ENCODE measurements at regions of chr12 and their contacts with region 1.

Region 1: GRCh38 chr12:53220801-53221202 is 11.2 kb downstream of the RARG start:
- DNase-seq: peak; percentile 46 to 93 (median 75)
- ATAC-seq: peak; percentile 60
- H3K4me3 ChIP-seq: peak overlapping the region; percentile 69 to 88
- H3K4me3 Mint-ChIP-seq: peak overlapping the region; percentile 99
- H3K27ac ChIP-seq: peak overlapping the region; percentile 66 to 91
- H3K27ac Mint-ChIP-seq: peak overlapping the region; percentile 93
- H3K4me1 ChIP-seq: peaks cover 67% of the 10 kb centered on the region
- H3K4me1 Mint-ChIP-seq: peaks cover 82% of the 10 kb centered on the region
- H3K27me3 ChIP-seq: no peaks in the 10 kb centered on the region
- H3K27me3 Mint-ChIP-seq: no peaks in the 10 kb centered on the region
- CTCF ChIP-seq: no peak

Region 2: DNA sequence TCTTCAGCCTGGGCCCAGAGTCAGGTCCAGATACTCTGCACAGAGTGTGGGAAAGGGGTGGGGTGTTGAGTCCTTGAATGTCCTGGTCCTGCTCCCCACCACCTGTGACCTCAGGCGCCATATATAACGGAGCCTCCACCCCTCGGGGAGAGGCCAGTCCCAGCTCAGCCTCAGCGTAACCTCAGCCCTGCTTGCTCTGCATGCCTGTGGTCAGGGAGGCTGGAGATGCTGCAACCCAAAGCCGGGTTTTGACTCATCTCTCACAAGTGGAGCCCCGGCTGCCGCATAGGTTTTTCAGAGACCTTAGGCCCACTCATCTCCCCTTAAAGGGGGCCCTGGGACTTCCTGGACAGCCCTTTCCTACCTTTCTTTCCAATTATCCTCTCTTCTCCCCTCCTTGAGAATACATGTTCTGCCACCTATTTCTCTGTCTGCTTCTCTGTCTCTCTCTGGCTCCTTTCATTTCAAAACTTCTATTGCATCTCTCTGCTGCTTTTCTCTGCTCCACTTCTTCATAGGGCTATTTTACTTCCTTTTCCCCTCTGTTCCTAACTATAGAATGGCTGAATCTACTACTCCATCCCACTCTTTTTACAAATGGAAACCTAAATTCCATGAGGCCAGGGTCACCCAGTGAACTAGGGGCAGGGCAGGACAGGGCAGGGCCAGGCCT is 14.9 kb before region 1 on chr12:
- CTCF ChIA-PET with region 1: interaction called, 26 read pairs
- POLR2A ChIA-PET with region 1: interaction called, 19 read pairs
- intact Hi-C with region 1: no loop called
- DNase-seq: peak in 8 of 9 experiments; percentile 43 to 74 (median 69)
- ATAC-seq: peak; percentile 53
- H3K4me3 ChIP-seq: peak overlapping the region; percentile 68 to 71
- H3K4me3 Mint-ChIP-seq: peak overlapping the region; percentile 84
- H3K27ac ChIP-seq: peak overlapping the region; percentile 48 to 71
- H3K27ac Mint-ChIP-seq: peak overlapping the region; percentile 90
- H3K4me1 ChIP-seq: peaks cover 70% of the 10 kb centered on the region
- H3K4me1 Mint-ChIP-seq: peaks cover 71% of the 10 kb centered on the region
- H3K27me3 ChIP-seq: no peaks in the 10 kb centered on the region
- H3K27me3 Mint-ChIP-seq: no peaks in the 10 kb centered on the region
- CTCF ChIP-seq: no peak

Region 3: GRCh38 chr12:53231826-53232645 is 11.2 kb after region 1 on chr12 and contains the start of gene RARG:
- CTCF ChIA-PET with region 1: interaction called, 3 read pairs
- POLR2A ChIA-PET with region 1: interaction called, 22 read pairs
- intact Hi-C with region 1: loop called (anchors 1 kb)
- DNase-seq: peak in 8 of 9 experiments; percentile 47 to 80 (median 66)
- ATAC-seq: peak; percentile 66
- H3K4me3 ChIP-seq: peak within 1 kb of the TSS; percentile 57
- H3K4me3 Mint-ChIP-seq: peak within 1 kb of the TSS; percentile 89
- H3K27ac ChIP-seq: peak within 1 kb of the TSS in 1 of 2 experiments; percentile 66
- H3K27ac Mint-ChIP-seq: peak within 1 kb of the TSS; percentile 78
- H3K4me1 ChIP-seq: peaks cover 59% of the 10 kb centered on the region
- H3K4me1 Mint-ChIP-seq: peaks cover 60% of the 10 kb centered on the region
- H3K27me3 ChIP-seq: no peaks in the 10 kb centered on the region
- H3K27me3 Mint-ChIP-seq: no peaks in the 10 kb centered on the region
- CTCF ChIP-seq: no peak
- total RNA-seq, gene RARG: 16.1 to 16.5 TPM

Region 4: DNA sequence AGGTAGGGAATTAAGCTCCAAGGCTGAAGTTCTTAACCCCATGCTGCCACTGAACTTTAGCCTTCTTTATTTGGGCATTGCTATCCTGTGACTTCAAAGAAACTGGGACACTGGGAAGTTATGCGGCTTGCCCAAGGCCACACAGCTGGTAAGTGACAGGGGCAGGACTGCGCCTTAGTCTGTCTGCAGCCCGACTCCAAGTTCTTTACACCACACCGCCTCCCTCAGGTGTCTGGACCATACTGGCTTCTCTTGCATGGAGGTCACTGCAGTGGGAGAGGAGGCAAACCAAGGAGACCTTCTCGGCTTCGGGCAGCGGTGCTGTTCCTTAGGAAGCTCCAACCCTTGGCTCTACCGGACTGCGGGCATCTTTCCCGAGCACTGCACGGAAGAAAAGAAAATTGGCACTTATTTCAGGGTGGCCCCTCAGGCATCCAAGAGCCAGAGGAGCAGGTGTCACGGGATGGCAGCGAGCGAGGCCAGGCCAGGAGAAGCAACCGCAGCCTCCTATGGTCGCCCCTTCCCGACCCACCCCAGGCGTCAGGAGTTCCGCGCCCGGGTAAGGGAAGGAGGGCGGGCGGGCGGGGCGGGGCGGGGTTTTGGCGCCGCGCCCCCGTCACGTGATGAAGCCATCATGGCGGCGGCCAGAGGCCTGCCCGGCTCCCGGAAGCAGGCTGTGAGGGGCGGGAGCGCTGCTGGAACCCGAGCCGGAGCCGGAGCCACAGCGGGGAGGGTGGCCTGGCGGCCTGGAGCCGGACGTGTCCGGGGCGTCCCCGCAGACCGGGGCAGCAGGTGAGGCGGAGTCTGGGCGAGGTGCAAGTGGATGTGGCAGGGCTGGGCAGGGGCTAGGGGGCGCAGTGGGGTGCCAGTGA is 30.9 kb after region 1 on chr12:
- CTCF ChIA-PET with region 1: interaction called, 143 read pairs
- POLR2A ChIA-PET with region 1: interaction called, 13 read pairs
- intact Hi-C with region 1: loop called (anchors 1 kb)
- DNase-seq: peak; percentile 28 to 85 (median 71)
- ATAC-seq: peak; percentile 87
- H3K4me3 ChIP-seq: peak overlapping the region; percentile 71 to 86
- H3K4me3 Mint-ChIP-seq: peak overlapping the region; percentile 98
- H3K27ac ChIP-seq: peak overlapping the region; percentile 70 to 80
- H3K27ac Mint-ChIP-seq: peak overlapping the region; percentile 96
- H3K4me1 ChIP-seq: peaks cover 46% of the 10 kb centered on the region
- H3K4me1 Mint-ChIP-seq: peaks cover 50% of the 10 kb centered on the region
- H3K27me3 ChIP-seq: no peaks in the 10 kb centered on the region
- H3K27me3 Mint-ChIP-seq: no peaks in the 10 kb centered on the region
- CTCF ChIP-seq: peak; percentile 40

Region 5: DNA sequence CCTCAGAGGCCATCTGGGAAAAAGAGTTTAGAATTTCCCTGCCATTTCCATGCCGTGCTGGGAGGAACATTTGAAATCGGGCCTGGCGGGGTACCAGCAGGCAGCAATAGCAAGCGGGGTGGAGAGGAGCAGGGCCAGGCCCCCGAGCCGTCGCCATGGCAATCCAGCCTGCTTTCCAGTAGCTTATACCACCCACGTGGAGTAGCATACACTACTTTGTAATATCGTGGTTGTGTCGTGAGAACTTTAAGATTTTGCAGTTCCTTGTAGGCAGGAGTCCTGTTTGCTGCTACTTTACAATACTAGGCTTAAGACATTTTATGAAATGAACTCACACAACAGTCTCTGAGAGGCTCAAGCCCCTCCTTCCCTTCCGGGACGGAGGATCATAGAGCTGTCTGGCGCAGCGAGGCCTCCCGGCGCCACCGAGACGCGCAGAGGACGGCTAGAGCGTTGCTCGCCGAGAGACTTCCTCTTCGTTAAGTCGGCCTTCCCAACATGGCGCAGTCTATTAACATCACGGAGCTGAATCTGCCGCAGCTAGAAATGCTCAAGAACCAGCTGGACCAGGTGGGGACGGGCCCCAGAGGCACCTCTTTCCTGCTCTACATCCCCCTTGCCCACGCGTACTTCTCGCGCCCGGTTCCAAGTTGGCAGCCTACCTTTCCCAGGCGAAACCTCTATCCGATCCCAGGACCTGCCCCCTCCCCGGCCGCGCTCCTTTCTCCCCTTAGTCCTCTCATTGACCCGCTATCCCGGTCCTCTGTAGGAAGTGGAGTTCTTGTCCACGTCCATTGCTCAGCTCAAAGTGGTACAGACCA is 74.5 kb after region 1 on chr12 and contains the start of gene PFDN5:
- CTCF ChIA-PET with region 1: interaction called, 353 read pairs
- POLR2A ChIA-PET with region 1: interaction called, 11 read pairs
- intact Hi-C with region 1: loop called in 1 of 2 experiments (anchors 2 kb)
- DNase-seq: peak; percentile 72 to 95 (median 87)
- ATAC-seq: peak; percentile 92
- H3K4me3 ChIP-seq: peak within 1 kb of the TSS; percentile 75 to 88
- H3K4me3 Mint-ChIP-seq: peak within 1 kb of the TSS; percentile 99
- H3K27ac ChIP-seq: peak within 1 kb of the TSS; percentile 80 to 82
- H3K27ac Mint-ChIP-seq: peak within 1 kb of the TSS; percentile 99
- H3K4me1 ChIP-seq: peaks cover 28% of the 10 kb centered on the region
- H3K4me1 Mint-ChIP-seq: peaks cover 51% of the 10 kb centered on the region
- H3K27me3 ChIP-seq: no peaks in the 10 kb centered on the region
- H3K27me3 Mint-ChIP-seq: no peaks in the 10 kb centered on the region
- CTCF ChIP-seq: no peak
- total RNA-seq, gene PFDN5: 741 to 751 TPM

Region 6: DNA sequence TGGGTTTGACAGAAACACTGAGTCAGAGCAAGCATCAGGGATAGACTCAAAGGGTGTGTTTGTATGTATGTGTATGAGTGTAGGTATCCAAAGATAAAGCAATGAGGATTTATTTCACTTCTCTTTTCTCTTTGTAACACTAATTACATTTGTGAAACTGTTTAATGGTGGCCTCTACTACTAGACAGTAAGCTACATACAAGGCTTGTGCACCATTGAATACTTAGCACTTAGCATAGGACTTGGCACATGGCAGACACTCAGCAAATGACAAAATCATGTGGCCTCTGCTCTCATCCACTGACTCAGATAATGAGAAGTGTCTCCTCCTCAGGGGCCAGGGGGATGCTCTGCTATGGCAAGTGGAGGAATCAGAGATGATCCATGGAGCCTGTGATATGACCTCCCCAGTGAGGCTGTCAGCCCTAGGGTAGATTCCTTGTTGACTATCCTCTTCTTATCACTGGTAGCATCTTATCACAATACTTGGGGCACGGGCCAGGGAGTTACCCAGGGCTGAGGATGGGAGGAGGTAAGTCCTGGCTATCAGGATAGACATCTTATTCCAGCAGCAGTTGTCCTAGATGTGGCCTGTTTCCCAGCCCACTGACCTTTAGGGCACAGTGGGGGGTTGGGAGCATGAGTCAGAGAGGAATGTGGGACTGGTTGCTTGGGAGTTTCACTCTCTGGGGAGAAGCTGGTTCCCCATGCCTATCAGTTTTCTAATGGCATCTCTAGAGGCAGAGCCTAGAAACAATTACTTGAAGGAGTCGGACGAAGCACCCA is 646.6 kb after region 1 on chr12:
- CTCF ChIA-PET with region 1: no interaction called
- POLR2A ChIA-PET with region 1: no interaction called
- intact Hi-C with region 1: no loop called
- DNase-seq: no peak
- ATAC-seq: no peak
- H3K4me3 ChIP-seq: no peak overlapping the region
- H3K4me3 Mint-ChIP-seq: no peak overlapping the region
- H3K27ac ChIP-seq: no peak overlapping the region
- H3K27ac Mint-ChIP-seq: no peak overlapping the region
- H3K4me1 ChIP-seq: no peaks in the 10 kb centered on the region
- H3K4me1 Mint-ChIP-seq: no peaks in the 10 kb centered on the region
- H3K27me3 ChIP-seq: peaks cover 7 to 8% of the 10 kb centered on the region in 2 experiments
- H3K27me3 Mint-ChIP-seq: peaks cover 35% of the 10 kb centered on the region
- CTCF ChIP-seq: no peak

Measured in CD8-positive, alpha-beta T cell (primary cell).